HCT116 (cell line): ENCODE measurements at regions of chr7 and their contacts with region 1.

Region 1: GRCh38 chr7:139602143-139602722 is 78.7 kb downstream of the CLEC2L start:
- DNase-seq: peak; percentile 15
- ATAC-seq: peak; percentile 89
- H3K4me3 ChIP-seq: no peak overlapping the region
- H3K27ac ChIP-seq: no peak overlapping the region
- H3K4me1 ChIP-seq: no peaks in the 10 kb centered on the region
- H3K27me3 ChIP-seq: no peaks in the 10 kb centered on the region
- CTCF ChIP-seq: peak; percentile 52 to 62 (median 53); a peak in 5 of 6 replicates
- POLR2A ChIP-seq: no peak
- RAD21 ChIP-seq: peak; percentile 69

Region 2: DNA sequence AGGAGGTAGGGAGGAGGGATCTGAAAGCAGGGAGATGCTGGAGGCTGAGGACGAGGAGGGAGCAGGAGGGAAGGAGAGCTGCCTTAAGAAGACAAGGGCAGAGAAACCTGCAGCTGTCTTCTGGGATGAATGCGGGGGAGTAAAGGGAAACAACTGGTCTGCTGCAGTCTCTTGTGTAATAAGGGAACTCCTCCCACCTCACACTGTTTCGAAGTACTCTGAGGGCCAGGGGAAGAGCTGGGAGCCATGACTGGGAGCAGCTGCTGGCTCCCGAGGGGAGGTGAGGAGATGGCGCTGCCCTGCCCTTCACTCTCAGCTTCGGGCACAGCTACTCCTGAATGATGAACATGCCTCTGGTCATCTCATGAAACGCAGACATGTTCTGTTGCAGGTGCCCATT is 13.6 kb before region 1 on chr7:
- CTCF ChIA-PET with region 1: interaction called, 16 read pairs
- POLR2A ChIA-PET with region 1: no interaction called
- RAD21 ChIA-PET with region 1: no interaction called
- intact Hi-C with region 1: no loop called
- DNase-seq: no peak
- ATAC-seq: no peak
- H3K4me3 ChIP-seq: no peak overlapping the region
- H3K27ac ChIP-seq: no peak overlapping the region
- H3K4me1 ChIP-seq: no peaks in the 10 kb centered on the region
- H3K27me3 ChIP-seq: no peaks in the 10 kb centered on the region
- CTCF ChIP-seq: no peak
- POLR2A ChIP-seq: no peak
- RAD21 ChIP-seq: no peak